ENCODE measurements at regions of chr14 and their contacts with region 1.

Region 1: GRCh38 chr14:87386524-87386923 is 606.5 kb downstream of the GALC start:
- DNase-seq: peak; percentile 41
- H3K4me3 ChIP-seq: no peak overlapping the region
- H3K27ac ChIP-seq: no peak overlapping the region
- H3K4me1 ChIP-seq: peaks cover 11% of the 10 kb centered on the region
- CTCF ChIP-seq: no peak

Region 2: GRCh38 chr14:87158283-87158682 is 228.2 kb before region 1 on chr14:
- CTCF ChIA-PET with region 1: no interaction called
- POLR2A ChIA-PET with region 1: no interaction called
- intact Hi-C with region 1: loop called (anchors 5 kb)
- DNase-seq: no peak
- H3K4me3 ChIP-seq: no peak overlapping the region
- H3K27ac ChIP-seq: no peak overlapping the region
- H3K4me1 ChIP-seq: peaks cover 34% of the 10 kb centered on the region
- CTCF ChIP-seq: no peak

Region 3: GRCh38 chr14:87368752-87369151 is 17.8 kb before region 1 on chr14:
- CTCF ChIA-PET with region 1: no interaction called
- POLR2A ChIA-PET with region 1: interaction called, 10 read pairs
- intact Hi-C with region 1: no loop called
- DNase-seq: no peak
- H3K4me3 ChIP-seq: no peak overlapping the region
- H3K27ac ChIP-seq: no peak overlapping the region
- H3K4me1 ChIP-seq: no peaks in the 10 kb centered on the region
- CTCF ChIP-seq: no peak

Region 4: GRCh38 chr14:87397499-87397898 is 11.0 kb after region 1 on chr14:
- CTCF ChIA-PET with region 1: no interaction called
- POLR2A ChIA-PET with region 1: interaction called, 21 read pairs
- intact Hi-C with region 1: no loop called
- DNase-seq: peak; percentile 45
- H3K4me3 ChIP-seq: no peak overlapping the region
- H3K27ac ChIP-seq: no peak overlapping the region
- H3K4me1 ChIP-seq: peaks cover 8% of the 10 kb centered on the region
- CTCF ChIP-seq: no peak

Measured in OCI-LY7 (cell line).